KBM-7 (cell line): ENCODE measurements at regions of chr12 and their contacts with region 1.

Region 1: DNA sequence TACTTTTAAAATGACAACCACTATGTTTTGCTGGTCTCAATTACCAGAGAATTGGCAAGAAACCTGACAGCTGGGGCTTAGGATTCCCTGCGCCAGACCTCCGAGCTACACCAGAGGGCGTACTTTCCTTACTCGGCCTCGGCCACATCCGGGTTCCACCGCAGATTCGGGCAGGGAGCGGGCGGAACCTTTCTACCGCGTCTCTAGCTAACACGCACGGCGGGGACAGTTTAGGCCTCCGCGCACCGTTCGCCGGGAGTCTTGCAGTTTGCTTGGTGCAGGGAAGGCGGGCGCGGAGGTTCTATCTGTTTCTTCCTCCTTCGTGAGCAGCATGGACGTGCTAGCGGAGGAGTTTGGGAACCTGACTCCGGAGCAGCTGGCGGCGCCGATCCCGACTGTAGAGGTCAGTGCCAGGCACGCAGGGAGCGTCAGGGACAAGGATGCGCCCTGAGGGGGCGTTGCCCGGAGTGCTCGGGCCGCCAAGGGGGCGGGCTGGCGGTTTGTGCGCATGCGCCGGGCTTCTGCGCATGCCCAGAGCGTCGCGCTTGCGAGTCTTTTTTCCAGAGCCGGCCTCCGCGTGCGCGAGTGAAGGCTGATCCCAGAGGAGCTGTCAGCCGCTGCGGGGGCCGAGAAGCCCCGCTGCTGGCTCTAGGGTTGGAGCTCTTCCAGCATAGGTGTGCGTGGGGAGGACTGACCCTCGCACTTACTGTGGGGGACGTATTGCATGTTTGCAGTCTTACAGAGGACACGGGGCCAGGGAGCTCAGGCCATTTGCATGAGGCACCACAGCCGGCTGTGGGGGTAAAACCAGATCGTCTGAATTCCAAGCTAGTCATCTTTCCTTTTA is at the start of gene POLR3B:
- DNase-seq: peak; percentile 97

Region 2: DNA sequence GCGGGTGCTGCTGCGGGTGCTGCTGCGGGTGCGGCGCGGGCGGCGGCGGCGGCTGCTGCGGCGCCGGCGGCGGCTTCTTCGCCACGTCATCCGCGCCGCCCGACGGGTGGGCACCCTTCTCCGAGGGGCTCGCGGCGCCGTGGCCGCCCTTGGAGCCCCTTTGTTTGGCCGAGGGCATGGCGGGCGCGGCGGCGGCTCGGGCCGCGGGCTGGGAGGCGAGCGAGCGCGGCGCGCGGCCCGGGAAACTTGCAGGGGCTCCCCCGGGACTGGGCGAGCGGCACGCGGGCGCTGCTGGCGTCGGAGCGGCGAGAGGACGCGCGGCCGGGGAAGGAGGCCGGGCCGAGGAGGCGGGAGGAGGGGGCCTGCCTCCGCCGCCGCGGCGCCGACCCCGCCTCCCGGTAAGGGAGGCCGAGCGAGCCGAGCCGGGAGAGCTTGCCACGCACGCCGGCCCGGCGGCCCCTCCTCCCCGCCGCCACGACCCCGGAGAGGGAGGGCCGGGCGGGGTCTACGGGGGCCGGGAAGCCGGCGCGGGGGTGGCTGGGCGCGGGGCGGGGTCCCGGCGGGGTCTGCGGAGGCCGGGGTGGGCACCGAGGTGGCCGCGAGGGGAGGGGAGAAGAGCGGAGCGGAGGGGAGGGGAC is 110.0 kb before region 1 on chr12 and contains the start of gene CKAP4:
- in situ Hi-C with region 1: loop called (anchors 25 kb)
- DNase-seq: peak; percentile 36

Region 3: GRCh38 chr12:106282457-106283097 is 75.2 kb before region 1 on chr12:
- in situ Hi-C with region 1: no loop called
- DNase-seq: peak; percentile 66

Region 4: DNA sequence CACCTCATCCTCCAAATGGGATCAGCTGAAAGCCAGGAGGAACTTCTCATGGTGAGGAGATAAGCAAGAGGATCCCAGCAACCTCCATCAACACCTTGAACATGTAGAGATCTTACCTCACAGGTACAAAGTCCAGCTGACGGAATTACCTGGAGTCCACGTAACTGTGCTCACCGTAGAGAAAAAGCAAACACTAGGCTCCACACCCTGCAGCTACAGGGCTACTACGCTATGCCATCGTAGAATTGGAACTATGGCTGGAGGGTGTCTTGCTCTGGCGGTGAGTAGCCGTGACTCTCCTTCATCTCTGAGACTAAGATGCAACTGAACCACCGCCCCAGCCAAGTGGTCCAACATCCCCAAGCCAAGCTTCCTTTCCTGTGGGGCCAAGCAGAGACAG is 685.0 kb after region 1 on chr12:
- in situ Hi-C with region 1: no loop called
- DNase-seq: no peak